ENCODE measurements at regions of chr13 and their contacts with region 1.

Region 1: GRCh38 chr13:45310341-45311125 is 30.4 kb downstream of the TPT1 start:
- DNase-seq: no peak
- H3K4me3 Mint-ChIP-seq: peak overlapping the region; percentile 87
- H3K27ac Mint-ChIP-seq: no peak overlapping the region
- H3K4me1 Mint-ChIP-seq: peaks cover 21% of the 10 kb centered on the region
- H3K27me3 Mint-ChIP-seq: peaks cover 23% of the 10 kb centered on the region

Region 2: GRCh38 chr13:44484562-44485138 is 825.9 kb before region 1 on chr13:
- intact Hi-C with region 1: loop called (anchors 2 kb)
- DNase-seq: peak; percentile 60
- H3K4me3 Mint-ChIP-seq: peak overlapping the region; percentile 64
- H3K27ac Mint-ChIP-seq: no peak overlapping the region
- H3K4me1 Mint-ChIP-seq: peaks cover 8% of the 10 kb centered on the region
- H3K27me3 Mint-ChIP-seq: peaks cover 3% of the 10 kb centered on the region

Region 3: GRCh38 chr13:44988973-44989817 is 321.3 kb before region 1 on chr13 and contains the starts of genes GPALPP1 and NUFIP1:
- intact Hi-C with region 1: loop called (anchors 5 kb)
- DNase-seq: peak; percentile 98
- H3K4me3 Mint-ChIP-seq: peak within 1 kb of the TSS; percentile 99
- H3K27ac Mint-ChIP-seq: peak within 1 kb of the TSS; percentile 98
- H3K4me1 Mint-ChIP-seq: peaks cover 46% of the 10 kb centered on the region
- H3K27me3 Mint-ChIP-seq: no peaks in the 10 kb centered on the region
- total RNA-seq, gene GPALPP1: 29.1 and 32.3 TPM in 2 replicates
- total RNA-seq, gene NUFIP1: 13.3 and 13.8 TPM in 2 replicates

Region 4: GRCh38 chr13:45047394-45048310 is 262.9 kb before region 1 on chr13:
- intact Hi-C with region 1: loop called (anchors 1 kb)
- DNase-seq: peak; percentile 92
- H3K4me3 Mint-ChIP-seq: peak overlapping the region; percentile 83
- H3K27ac Mint-ChIP-seq: no peak overlapping the region
- H3K4me1 Mint-ChIP-seq: peaks cover 12% of the 10 kb centered on the region
- H3K27me3 Mint-ChIP-seq: peaks cover 47% of the 10 kb centered on the region

Region 5: DNA sequence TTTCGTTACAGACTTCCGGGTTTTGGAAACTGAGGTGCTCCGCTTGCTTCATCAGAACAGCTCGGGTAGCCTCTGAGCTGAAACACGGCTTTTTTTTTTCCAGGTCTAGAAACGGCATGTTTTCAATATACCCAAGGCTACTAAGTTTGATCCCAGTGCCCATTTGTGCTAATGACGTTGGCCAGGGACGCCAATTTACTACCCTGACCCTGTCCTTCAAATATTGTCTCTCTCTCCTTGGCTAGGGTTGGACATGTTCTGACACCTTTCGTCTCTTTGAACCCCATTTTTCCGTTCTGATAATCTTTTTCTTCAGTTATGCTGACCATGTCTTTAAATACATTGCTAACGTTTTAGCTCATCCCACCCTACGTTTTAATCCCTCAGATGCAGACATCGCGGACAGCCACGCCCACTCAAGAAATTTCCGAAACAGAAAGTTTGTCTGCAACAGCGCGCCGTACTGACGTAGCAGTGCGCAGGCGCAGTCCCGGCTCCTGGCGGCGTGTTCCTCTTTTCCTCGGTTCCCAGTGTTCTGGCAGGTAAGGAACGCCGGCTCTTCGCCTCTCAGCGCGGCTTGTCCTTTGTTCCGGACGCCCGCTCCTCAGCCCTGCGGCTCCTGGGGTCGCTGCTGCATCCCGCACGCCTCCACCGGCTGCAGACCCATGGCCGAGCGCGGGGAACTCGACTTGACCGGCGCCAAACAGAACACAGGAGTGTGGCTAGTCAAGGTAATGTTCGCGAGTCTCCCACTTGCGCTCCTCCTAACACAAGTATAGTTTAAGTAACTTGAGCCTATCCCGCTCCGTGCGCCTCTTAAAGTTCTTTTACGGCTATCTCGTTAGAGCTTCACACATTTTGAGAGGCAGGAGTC is 190.3 kb before region 1 on chr13 and contains the start of gene GTF2F2:
- intact Hi-C with region 1: loop called (anchors 5 kb)
- DNase-seq: peak; percentile 97
- H3K4me3 Mint-ChIP-seq: no peak within 1 kb of the TSS
- H3K27ac Mint-ChIP-seq: no peak within 1 kb of the TSS
- H3K4me1 Mint-ChIP-seq: peaks cover 7% of the 10 kb centered on the region
- H3K27me3 Mint-ChIP-seq: no peaks in the 10 kb centered on the region
- total RNA-seq, gene GTF2F2: 29.2 and 30.0 TPM in 2 replicates

Measured in activated CD4-positive, alpha-beta T cell treated with anti-CD3 and anti-CD28 coated beads, Interleukin-2, amount 10 ng/mL, durations not matched to agents 24 days and 14 days (primary cell).